IMR-90 (cell line): ENCODE measurements at regions of chr9 and their contacts with region 1.

Region 1: GRCh38 chr9:134455934-134456739 is 129.9 kb downstream of the RXRA start:
- DNase-seq: peak; percentile 99
- ATAC-seq: peak; percentile 72
- H3K4me3 ChIP-seq: no peak overlapping the region
- H3K27ac ChIP-seq: peak overlapping the region; percentile 94
- H3K4me1 ChIP-seq: peaks cover 30% of the 10 kb centered on the region
- H3K27me3 ChIP-seq: no peaks in the 10 kb centered on the region
- CTCF ChIP-seq: no peak; the same call in 1 of the 2 replicates
- POLR2A ChIP-seq: peak; percentile 62; the same call in 1 of the 2 replicates
- RAD21 ChIP-seq: peak; percentile 50; the same call in 1 of the 2 replicates

Region 2: DNA sequence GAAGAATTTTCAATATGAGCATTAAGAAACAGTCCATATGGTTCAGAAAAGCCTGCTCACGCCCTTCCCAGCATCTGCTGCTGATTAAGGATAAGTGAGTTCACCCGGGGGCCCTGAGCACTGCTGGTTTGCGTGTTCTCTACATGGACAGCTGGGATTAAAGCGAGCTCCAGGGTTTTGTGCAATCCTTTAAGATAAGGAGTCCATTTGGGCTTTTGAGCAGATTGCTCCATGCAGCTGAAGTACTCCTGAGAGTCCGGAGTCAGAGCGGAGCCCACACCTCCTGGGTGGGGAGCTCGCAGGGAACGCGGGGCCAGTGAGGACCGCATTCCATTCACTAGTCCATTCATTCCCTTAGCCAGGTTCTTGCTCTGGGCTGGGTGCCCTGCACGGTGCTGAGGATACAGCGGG is 36.1 kb after region 1 on chr9:
- CTCF ChIA-PET with region 1: no interaction called
- POLR2A ChIA-PET with region 1: no interaction called
- dilution Hi-C with region 1: no loop called
- in situ Hi-C with region 1: no loop called
- intact Hi-C with region 1: loop called (anchors 2 kb)
- DNase-seq: peak; percentile 91
- ATAC-seq: peak; percentile 88
- H3K4me3 ChIP-seq: no peak overlapping the region
- H3K27ac ChIP-seq: peak overlapping the region; percentile 41; the same call in 1 of the 2 replicates
- H3K4me1 ChIP-seq: peaks cover 22% of the 10 kb centered on the region
- H3K27me3 ChIP-seq: peaks cover 5% of the 10 kb centered on the region
- CTCF ChIP-seq: no peak
- POLR2A ChIP-seq: no peak
- RAD21 ChIP-seq: no peak; the same call in 1 of the 2 replicates

Region 3: GRCh38 chr9:134536101-134536900 is 80.2 kb after region 1 on chr9:
- CTCF ChIA-PET with region 1: no interaction called
- POLR2A ChIA-PET with region 1: no interaction called
- dilution Hi-C with region 1: no loop called
- in situ Hi-C with region 1: no loop called
- intact Hi-C with region 1: loop called (anchors 10 kb)
- DNase-seq: peak; percentile 87
- ATAC-seq: peak; percentile 79
- H3K4me3 ChIP-seq: no peak overlapping the region
- H3K27ac ChIP-seq: peak overlapping the region; percentile 3; the same call in 1 of the 2 replicates
- H3K4me1 ChIP-seq: peaks cover 23% of the 10 kb centered on the region
- H3K27me3 ChIP-seq: no peaks in the 10 kb centered on the region
- CTCF ChIP-seq: no peak
- POLR2A ChIP-seq: no peak
- RAD21 ChIP-seq: peak; percentile 15; the same call in 1 of the 2 replicates

Region 4: GRCh38 chr9:134602547-134603309 is 146.6 kb after region 1 on chr9:
- CTCF ChIA-PET with region 1: interaction called, 3 read pairs
- POLR2A ChIA-PET with region 1: no interaction called
- dilution Hi-C with region 1: no loop called
- in situ Hi-C with region 1: no loop called
- intact Hi-C with region 1: loop called (anchors 1 kb)
- DNase-seq: peak; percentile 99
- ATAC-seq: peak; percentile 91
- H3K4me3 ChIP-seq: no peak overlapping the region
- H3K27ac ChIP-seq: peak overlapping the region; percentile 95
- H3K4me1 ChIP-seq: peaks cover 15% of the 10 kb centered on the region
- H3K27me3 ChIP-seq: no peaks in the 10 kb centered on the region
- CTCF ChIP-seq: no peak
- POLR2A ChIP-seq: no peak
- RAD21 ChIP-seq: peak; percentile 31; the same call in 1 of the 2 replicates